Ovary (tissue), 10 donors: ENCODE measurements at regions of chr9 and their contacts with region 1.

Region 1: DNA sequence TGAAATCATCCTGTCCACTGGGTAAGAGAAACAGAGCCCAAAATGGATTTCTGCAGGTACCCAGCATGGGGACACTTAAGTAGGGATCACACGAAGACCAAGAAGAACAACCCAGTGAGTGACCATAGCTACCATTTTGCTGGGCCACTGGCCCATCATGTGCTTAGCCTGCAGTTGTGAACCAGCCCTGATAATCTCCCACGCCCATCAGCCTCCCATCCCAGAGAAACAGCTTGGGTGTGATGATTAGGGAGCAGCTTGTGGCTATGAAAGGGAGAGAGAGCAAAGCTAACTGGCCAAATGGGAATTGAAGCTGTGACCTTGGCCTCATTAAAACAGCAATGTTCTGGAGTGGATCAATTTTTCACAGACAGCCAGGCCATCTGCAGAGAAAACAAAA is 138.5 kb downstream of the SLC24A2 start:
- DNase-seq: no peak
- H3K4me3 ChIP-seq: no peak overlapping the region
- H3K27ac ChIP-seq: no peak overlapping the region
- H3K4me1 ChIP-seq: no peaks in the 10 kb centered on the region
- H3K27me3 ChIP-seq: no peaks in the 10 kb centered on the region
- CTCF ChIP-seq: no peak
- EP300 ChIP-seq: no peak
- POLR2A ChIP-seq: no peak

Region 2: DNA sequence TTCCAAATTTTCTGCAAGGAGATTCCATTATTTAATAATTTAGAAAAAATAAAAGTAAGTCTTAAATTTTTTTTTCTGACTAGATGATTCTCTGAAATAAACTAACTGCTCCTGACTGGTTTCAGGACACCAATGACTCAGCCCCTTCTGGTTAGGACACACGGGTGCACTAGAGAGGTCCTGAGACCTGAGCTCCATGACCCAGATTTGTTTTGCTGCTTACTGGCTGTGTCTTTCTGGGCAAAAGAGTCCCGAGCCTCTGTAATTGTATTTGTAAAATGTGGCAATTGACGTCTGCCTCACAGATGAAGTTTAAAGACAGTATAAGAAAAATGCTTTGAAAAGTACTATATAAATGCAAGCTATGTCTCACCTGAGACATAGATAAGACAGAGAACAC is 49.4 kb after region 1 on chr9:
- intact Hi-C with region 1: loop called in 1 of 4 experiments (anchors 10 kb)
- DNase-seq: no peak
- H3K4me3 ChIP-seq: no peak overlapping the region
- H3K27ac ChIP-seq: no peak overlapping the region
- H3K4me1 ChIP-seq: no peaks in the 10 kb centered on the region
- H3K27me3 ChIP-seq: no peaks in the 10 kb centered on the region
- CTCF ChIP-seq: no peak
- EP300 ChIP-seq: no peak
- POLR2A ChIP-seq: no peak